ENCODE measurements at regions of chr16 and their contacts with region 1.

Region 1: GRCh38 chr16:18969855-18970240 is 13.9 kb upstream of the TMC7 start:
- DNase-seq: no peak
- H3K4me3 ChIP-seq: no peak overlapping the region
- CTCF ChIP-seq: no peak

Region 2: DNA sequence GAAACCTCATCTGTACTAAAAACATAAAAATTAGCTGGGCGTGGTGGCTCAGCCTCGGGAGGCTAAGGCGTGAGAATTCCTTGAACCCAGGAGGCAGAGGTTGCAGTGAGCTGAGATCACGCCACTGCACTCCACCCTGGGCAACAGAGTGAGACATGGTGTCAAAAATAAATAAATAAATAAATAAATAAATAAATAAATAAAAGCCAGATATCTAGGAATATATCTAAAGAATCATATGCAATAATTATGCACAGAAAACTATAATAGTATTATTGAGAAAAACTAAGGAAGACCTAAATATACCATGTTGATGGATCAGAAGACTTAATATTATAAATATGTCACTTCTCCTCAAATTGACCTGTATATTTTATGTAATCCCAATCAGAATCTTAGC is 50.8 kb after region 1 on chr16:
- in situ Hi-C with region 1: loop called (anchors 5 kb)
- DNase-seq: no peak
- H3K4me3 ChIP-seq: no peak overlapping the region
- CTCF ChIP-seq: no peak

Region 3: GRCh38 chr16:19062706-19063105 is 92.9 kb after region 1 on chr16:
- in situ Hi-C with region 1: loop called (anchors 5 kb)
- DNase-seq: no peak
- H3K4me3 ChIP-seq: no peak overlapping the region
- CTCF ChIP-seq: no peak

Region 4: DNA sequence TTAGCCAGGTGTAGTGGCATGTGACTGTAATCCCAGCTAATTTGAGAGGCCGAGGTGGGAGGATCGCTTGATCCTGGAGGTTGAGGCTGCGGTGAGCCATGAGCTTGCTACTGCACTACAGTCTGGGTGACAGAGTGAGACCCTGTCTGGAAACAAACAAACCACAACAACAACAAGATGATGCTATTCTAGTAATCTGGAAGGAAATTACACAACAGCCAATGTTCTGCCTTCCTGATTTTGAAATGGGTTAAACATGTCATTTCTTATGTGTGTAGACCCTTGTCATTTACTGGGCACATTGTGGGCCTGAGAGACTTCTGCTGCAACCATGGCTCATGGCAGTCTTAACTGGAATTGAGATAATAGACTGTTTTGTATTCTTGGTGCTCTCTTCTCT is 103.5 kb after region 1 on chr16:
- in situ Hi-C with region 1: no loop called
- DNase-seq: no peak
- H3K4me3 ChIP-seq: no peak overlapping the region
- CTCF ChIP-seq: no peak